ENCODE measurements at regions of chr1 and their contacts with region 1.

Region 1: DNA sequence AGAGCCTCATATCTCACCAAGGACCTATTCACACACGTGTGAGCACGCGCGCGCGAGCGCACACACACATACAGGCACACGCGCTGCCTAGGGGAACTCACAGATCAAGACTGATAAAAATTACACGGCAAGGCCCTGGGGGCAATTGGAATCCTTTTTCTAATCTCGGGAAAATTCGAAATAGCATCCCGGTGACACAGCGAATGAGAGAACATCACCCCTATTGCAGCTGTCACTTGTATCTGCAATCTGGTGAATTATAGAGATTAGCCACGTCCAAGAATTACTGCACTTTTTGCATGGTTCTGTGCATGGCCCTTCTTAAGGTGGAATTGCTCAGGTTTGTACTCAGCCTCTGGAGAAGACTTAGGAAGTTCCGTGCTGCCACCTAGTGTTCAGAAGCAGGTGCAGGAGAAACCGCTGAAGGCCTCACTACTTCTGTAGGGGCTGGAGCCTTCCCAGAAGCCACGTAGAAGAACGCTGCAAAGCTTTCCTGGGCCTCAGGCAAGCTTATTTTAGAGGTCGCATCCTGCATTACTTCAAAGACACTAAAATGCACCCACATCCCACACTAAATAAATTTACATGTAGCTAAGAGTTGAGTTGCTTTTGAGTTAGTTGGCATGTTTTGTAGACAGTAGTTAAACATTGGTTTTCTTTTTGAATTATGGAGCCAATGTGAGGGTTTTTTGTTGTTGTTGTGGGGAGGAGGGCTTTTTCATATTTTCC is 229.2 kb upstream of the CAMK1G start:
- DNase-seq: peak; percentile 83
- ATAC-seq: peak; percentile 90
- H3K4me3 Mint-ChIP-seq: no peak overlapping the region
- H3K27ac Mint-ChIP-seq: peak overlapping the region; percentile 44; the same call in 1 of the 2 replicates
- H3K4me1 Mint-ChIP-seq: peaks cover 61% of the 10 kb centered on the region
- H3K27me3 Mint-ChIP-seq: no peaks in the 10 kb centered on the region
- CTCF ChIP-seq: peak; percentile 84

Region 2: DNA sequence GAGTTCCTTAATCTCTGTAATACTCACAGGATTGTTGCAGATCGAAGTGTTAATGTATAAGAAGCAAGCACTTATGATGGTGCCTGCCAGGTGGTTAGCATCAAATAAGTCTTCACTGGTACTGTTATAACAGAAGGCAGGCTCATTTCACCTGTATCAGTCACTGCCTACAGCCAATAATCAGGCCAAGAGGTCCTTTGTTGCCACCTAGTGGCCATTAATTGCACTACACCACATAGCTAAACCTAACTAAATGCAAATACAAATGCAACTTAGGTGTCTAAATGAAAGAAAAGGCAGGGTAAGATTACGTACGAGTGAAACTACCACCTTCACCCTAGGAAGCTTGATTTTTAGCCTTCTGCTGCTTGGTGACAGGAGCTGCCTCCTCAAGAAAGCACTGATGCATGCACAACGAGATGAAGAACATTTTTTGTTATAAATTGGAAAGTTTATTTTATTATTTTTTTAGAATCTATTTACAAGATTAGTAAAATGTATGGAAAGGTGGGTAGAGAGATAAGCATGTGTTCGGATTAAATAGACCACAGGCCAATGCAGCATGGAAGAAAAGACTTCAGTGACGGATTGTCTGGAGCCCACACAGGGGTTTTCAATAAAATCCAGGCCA is 105.5 kb before region 1 on chr1:
- CTCF ChIA-PET with region 1: interaction called, 10 read pairs
- POLR2A ChIA-PET with region 1: no interaction called
- DNase-seq: peak; percentile 62
- ATAC-seq: peak; percentile 88
- H3K4me3 Mint-ChIP-seq: no peak overlapping the region
- H3K27ac Mint-ChIP-seq: peak overlapping the region; percentile 81
- H3K4me1 Mint-ChIP-seq: peaks cover 41% of the 10 kb centered on the region
- H3K27me3 Mint-ChIP-seq: no peaks in the 10 kb centered on the region
- CTCF ChIP-seq: peak; percentile 86

Region 3: DNA sequence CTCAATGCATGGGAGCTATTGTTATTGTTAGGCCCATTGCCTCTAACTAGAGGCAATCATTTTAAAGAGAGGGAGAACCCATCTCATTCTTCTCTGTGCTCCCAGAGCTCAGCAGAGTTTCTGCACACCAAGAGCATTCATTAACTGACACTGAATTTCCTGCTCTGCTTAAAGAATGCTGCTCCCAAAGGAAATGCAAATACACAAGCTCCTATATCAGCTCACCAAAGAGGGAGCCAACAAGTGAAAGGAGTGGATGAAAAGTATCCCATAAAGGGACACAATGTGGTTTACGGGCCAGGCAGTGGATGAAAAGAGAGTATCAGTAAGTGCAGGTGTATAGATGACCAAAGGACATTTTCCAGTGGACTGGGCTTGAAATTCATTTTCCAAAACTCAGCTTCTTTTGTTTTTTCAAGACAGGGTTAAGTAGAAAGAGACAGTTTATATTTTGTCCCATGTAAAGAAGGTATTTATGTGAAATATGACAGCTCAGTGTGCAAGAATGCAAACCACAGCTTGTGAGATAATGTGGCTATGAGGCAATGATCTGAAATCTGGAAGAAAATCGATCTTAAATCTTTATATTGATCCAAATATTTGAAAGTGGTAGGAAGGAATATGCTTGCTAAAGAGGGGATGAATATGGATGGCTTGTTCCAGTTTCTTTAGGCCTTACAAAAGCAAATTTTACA is 21.5 kb after region 1 on chr1:
- CTCF ChIA-PET with region 1: interaction called, 16 read pairs
- POLR2A ChIA-PET with region 1: no interaction called
- DNase-seq: no peak
- ATAC-seq: peak; percentile 97
- H3K4me3 Mint-ChIP-seq: no peak overlapping the region; the same call in 1 of the 2 replicates
- H3K27ac Mint-ChIP-seq: peak overlapping the region; percentile 94
- H3K4me1 Mint-ChIP-seq: peaks cover 77% of the 10 kb centered on the region
- H3K27me3 Mint-ChIP-seq: no peaks in the 10 kb centered on the region
- CTCF ChIP-seq: no peak

Region 4: GRCh38 chr1:209405183-209405814 is 51.0 kb after region 1 on chr1:
- CTCF ChIA-PET with region 1: interaction called, 17 read pairs
- POLR2A ChIA-PET with region 1: interaction called, 4 read pairs
- DNase-seq: no peak
- ATAC-seq: peak; percentile 78
- H3K4me3 Mint-ChIP-seq: peak overlapping the region; percentile 45
- H3K27ac Mint-ChIP-seq: peak overlapping the region; percentile 97
- H3K4me1 Mint-ChIP-seq: peaks cover 13% of the 10 kb centered on the region; the same call in 1 of the 2 replicates
- H3K27me3 Mint-ChIP-seq: no peaks in the 10 kb centered on the region
- CTCF ChIP-seq: no peak

Region 5: GRCh38 chr1:209428241-209428921 is 74.1 kb after region 1 on chr1:
- CTCF ChIA-PET with region 1: interaction called, 17 read pairs
- POLR2A ChIA-PET with region 1: interaction called, 3 read pairs
- DNase-seq: peak; percentile 73
- ATAC-seq: peak; percentile 77
- H3K4me3 Mint-ChIP-seq: peak overlapping the region; percentile 89
- H3K27ac Mint-ChIP-seq: peak overlapping the region; percentile 95
- H3K4me1 Mint-ChIP-seq: peaks cover 83% of the 10 kb centered on the region
- H3K27me3 Mint-ChIP-seq: 0 out of 2 replicates have a peak, but pooled peaks cover 2% of the 10 kb centered on the region
- CTCF ChIP-seq: no peak

Region 6: DNA sequence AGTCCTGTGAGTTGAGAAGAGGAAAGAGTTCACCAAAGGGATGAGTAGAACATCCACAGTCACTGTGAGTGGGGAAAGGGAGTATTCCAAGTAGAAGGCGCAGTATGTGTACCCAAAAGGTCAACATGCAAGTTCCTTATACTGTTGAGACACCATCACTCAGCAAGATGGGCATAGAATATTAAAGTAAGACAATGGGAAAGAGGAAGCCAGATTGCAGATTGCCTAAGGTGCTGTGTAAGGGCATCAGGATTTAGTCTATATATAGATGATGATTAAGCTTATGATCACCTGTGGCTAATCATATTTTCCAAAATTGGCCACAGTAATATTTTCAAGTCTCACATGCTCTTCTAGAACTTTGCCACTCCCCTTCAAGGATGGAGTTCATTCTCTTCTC is 109.2 kb after region 1 on chr1:
- CTCF ChIA-PET with region 1: no interaction called
- POLR2A ChIA-PET with region 1: no interaction called
- DNase-seq: no peak
- ATAC-seq: no peak
- H3K4me3 Mint-ChIP-seq: no peak overlapping the region
- H3K27ac Mint-ChIP-seq: no peak overlapping the region
- H3K4me1 Mint-ChIP-seq: no peaks in the 10 kb centered on the region
- H3K27me3 Mint-ChIP-seq: peaks cover 23% of the 10 kb centered on the region
- CTCF ChIP-seq: no peak

Region 7: DNA sequence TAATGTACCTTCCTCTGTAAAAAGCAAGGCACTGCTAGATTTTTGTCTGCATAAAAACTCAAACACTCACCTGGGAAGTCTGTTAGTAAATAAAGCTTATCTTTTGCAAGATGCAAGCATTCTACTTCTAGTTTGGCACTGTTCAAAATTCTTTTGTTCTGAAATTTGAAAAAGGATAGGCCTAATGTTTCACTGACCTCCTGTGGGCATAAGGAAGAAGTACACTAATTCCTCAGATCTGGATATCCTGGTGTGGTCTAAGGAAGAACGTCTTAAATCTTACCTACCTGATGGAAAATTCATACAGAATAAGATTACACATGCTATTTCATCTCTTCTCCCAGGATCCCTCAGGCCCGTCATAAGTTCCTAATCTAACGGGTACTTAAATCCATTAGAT is 135.7 kb after region 1 on chr1:
- CTCF ChIA-PET with region 1: interaction called, 10 read pairs
- POLR2A ChIA-PET with region 1: no interaction called
- DNase-seq: no peak
- ATAC-seq: peak; percentile 73; the same call in 1 of the 2 replicates
- H3K4me3 Mint-ChIP-seq: no peak overlapping the region
- H3K27ac Mint-ChIP-seq: no peak overlapping the region
- H3K4me1 Mint-ChIP-seq: peaks cover 28% of the 10 kb centered on the region
- H3K27me3 Mint-ChIP-seq: no peaks in the 10 kb centered on the region; the same call in 1 of the 2 replicates
- CTCF ChIP-seq: peak; percentile 41; the same call in 1 of the 2 replicates

Region 8: DNA sequence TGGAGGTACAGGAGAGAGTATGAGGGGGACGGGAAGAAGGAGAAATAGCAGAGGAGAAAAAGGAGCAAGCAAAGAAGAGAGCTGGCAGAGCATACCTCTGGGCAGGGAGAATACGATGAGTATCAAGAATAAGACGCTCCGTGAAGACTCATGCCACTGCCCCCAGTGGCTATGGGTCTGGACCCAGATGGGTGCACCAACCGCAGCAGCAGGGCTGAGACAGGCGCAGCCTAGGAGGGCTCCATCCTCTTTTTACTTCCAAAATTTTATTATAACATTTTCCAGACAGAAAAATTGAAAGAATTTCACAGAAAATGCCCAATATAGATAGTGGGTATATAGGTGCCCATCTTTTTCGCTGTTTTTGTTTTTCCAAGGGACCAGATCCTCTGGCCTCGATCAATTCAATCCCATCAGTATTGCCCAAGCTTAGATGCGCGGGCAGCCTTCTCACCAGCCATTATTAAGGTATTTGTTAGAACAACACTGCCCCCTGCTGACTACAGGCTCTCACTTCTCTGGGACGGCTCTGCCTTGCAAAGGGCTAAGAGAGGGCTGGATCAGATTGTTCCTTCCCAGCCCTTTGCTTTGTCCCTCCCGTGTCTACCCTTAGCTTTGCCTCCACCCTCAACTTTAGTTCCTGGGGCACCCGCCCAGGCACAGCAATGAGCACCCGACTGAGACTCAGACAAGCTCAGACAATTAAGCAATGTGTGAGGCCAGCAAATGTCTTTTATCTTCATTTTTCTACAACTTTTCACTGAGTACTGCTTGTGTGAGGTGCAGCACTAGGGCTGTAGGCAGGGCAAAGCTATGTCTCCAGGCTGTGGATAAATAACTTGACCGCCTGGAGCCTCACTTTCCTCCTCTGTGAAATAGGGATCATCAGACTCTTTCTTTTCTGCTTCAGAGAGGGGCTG is 211.7 kb after region 1 on chr1:
- CTCF ChIA-PET with region 1: interaction called, 21 read pairs
- POLR2A ChIA-PET with region 1: no interaction called
- DNase-seq: peak; percentile 93
- ATAC-seq: peak; percentile 94
- H3K4me3 Mint-ChIP-seq: no peak overlapping the region
- H3K27ac Mint-ChIP-seq: no peak overlapping the region
- H3K4me1 Mint-ChIP-seq: peaks cover 32% of the 10 kb centered on the region
- H3K27me3 Mint-ChIP-seq: peaks cover 15% of the 10 kb centered on the region
- CTCF ChIP-seq: peak; percentile 65

Measured in WTC11 (cell line).